ENCODE measurements at regions of chr11 and their contacts with region 1.

Region 1: GRCh38 chr11:60121264-60121663 is 32.8 kb downstream of the MS4A2 start:
- DNase-seq: no peak
- ATAC-seq: no peak

Region 2: GRCh38 chr11:59822989-59823566 is 298.2 kb before region 1 on chr11:
- intact Hi-C with region 1: loop called (anchors 10 kb)
- DNase-seq: no peak
- ATAC-seq: peak; percentile 82

Region 3: GRCh38 chr11:60193687-60194433 is 72.6 kb after region 1 on chr11:
- intact Hi-C with region 1: loop called (anchors 10 kb)
- DNase-seq: no peak
- ATAC-seq: peak; percentile 69

Measured in Right ventricle myocardium superior (tissue), 1 donor.